ENCODE measurements at regions of chr10 and their contacts with region 1.

Region 1: DNA sequence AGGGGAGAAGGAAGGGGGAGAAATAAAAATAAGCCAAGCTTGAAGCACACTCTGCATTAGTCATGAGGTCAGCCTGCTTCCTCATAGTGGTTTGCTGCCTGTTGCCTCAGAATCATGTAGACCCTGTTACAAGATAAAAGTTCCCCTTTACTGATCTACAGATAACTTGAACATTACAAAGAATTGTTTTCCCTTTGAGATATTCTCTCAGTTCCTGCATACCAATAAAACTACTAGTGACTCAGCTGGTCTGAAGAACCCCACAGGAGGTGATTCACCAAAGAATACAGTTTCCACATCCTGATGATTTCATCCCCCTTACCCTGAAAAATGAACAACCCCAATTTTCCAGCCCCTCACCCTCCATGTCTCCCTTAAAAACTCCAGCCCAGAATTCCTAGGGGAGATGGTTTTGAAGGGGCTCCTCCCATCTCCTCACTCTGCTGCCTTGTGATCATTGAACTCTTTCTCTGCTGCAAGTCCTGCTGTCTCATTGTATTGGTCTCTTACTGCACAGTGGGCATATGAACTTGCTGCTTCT is 31.5 kb upstream of the NRP1 start:
- DNase-seq: peak; percentile 57
- H3K4me3 Mint-ChIP-seq: no peak overlapping the region
- H3K27ac Mint-ChIP-seq: peak overlapping the region; percentile 86
- H3K4me1 Mint-ChIP-seq: peaks cover 15% of the 10 kb centered on the region
- H3K27me3 Mint-ChIP-seq: no peaks in the 10 kb centered on the region

Region 2: GRCh38 chr10:33125522-33126517 is 240.1 kb before region 1 on chr10:
- intact Hi-C with region 1: no loop called
- DNase-seq: peak; percentile 82
- H3K4me3 Mint-ChIP-seq: peak overlapping the region; percentile 30
- H3K27ac Mint-ChIP-seq: peak overlapping the region; percentile 85
- H3K4me1 Mint-ChIP-seq: peaks cover 45% of the 10 kb centered on the region
- H3K27me3 Mint-ChIP-seq: no peaks in the 10 kb centered on the region

Region 3: DNA sequence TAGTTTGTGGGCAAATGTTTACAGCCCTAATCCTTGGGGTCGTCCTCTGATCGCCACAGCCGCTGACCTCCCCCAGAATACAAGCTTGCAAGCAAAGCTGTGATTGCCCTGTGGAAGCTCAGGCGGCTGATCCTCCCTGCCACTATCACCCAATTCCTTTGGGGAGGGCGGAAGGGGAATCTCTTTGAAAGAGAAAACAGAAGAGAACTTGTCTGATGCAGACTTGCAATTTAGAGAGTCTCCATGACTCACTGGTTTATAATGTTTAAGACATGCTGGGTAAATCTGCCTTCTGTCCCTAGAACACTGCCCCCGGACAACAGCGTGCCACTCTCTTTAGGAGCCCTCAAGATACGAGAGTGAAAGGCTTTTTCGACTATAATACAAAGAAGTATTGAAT is 107.0 kb before region 1 on chr10:
- intact Hi-C with region 1: loop called (anchors 5 kb)
- DNase-seq: no peak
- H3K4me3 Mint-ChIP-seq: no peak overlapping the region
- H3K27ac Mint-ChIP-seq: no peak overlapping the region
- H3K4me1 Mint-ChIP-seq: peaks cover 6% of the 10 kb centered on the region
- H3K27me3 Mint-ChIP-seq: peaks cover 23% of the 10 kb centered on the region

Region 4: DNA sequence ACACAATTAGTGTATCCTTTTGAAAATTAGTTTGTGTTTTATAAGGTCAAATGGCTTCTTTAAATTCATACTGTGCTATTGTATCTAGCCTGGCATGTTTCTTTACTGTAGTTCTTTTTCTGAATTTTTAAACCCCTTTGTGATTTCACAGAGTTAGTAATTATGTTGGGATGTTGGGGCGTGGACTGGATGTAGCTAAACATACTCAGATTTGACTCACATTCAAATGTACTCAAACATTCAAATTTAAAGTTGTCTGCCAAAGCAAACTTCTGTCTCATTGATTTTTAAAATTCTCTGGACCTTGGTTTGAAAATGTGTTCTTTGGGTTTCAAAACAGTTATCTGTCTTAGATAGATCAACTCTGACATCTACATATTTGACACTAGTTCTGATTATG is 24.3 kb before region 1 on chr10:
- intact Hi-C with region 1: no loop called
- DNase-seq: no peak
- H3K4me3 Mint-ChIP-seq: no peak overlapping the region
- H3K27ac Mint-ChIP-seq: no peak overlapping the region
- H3K4me1 Mint-ChIP-seq: peaks cover 7% of the 10 kb centered on the region
- H3K27me3 Mint-ChIP-seq: peaks cover 41% of the 10 kb centered on the region

Region 5: GRCh38 chr10:33376976-33377657 is 11.2 kb after region 1 on chr10:
- intact Hi-C with region 1: loop called (anchors 1 kb)
- DNase-seq: no peak
- H3K4me3 Mint-ChIP-seq: no peak overlapping the region
- H3K27ac Mint-ChIP-seq: peak overlapping the region; percentile 76
- H3K4me1 Mint-ChIP-seq: peaks cover 18% of the 10 kb centered on the region
- H3K27me3 Mint-ChIP-seq: no peaks in the 10 kb centered on the region

Region 6: GRCh38 chr10:33509231-33509831 is 143.4 kb after region 1 on chr10:
- intact Hi-C with region 1: loop called (anchors 5 kb)
- DNase-seq: peak; percentile 56
- H3K4me3 Mint-ChIP-seq: no peak overlapping the region
- H3K27ac Mint-ChIP-seq: no peak overlapping the region
- H3K4me1 Mint-ChIP-seq: peaks cover 3% of the 10 kb centered on the region
- H3K27me3 Mint-ChIP-seq: peaks cover 3% of the 10 kb centered on the region

Region 7: DNA sequence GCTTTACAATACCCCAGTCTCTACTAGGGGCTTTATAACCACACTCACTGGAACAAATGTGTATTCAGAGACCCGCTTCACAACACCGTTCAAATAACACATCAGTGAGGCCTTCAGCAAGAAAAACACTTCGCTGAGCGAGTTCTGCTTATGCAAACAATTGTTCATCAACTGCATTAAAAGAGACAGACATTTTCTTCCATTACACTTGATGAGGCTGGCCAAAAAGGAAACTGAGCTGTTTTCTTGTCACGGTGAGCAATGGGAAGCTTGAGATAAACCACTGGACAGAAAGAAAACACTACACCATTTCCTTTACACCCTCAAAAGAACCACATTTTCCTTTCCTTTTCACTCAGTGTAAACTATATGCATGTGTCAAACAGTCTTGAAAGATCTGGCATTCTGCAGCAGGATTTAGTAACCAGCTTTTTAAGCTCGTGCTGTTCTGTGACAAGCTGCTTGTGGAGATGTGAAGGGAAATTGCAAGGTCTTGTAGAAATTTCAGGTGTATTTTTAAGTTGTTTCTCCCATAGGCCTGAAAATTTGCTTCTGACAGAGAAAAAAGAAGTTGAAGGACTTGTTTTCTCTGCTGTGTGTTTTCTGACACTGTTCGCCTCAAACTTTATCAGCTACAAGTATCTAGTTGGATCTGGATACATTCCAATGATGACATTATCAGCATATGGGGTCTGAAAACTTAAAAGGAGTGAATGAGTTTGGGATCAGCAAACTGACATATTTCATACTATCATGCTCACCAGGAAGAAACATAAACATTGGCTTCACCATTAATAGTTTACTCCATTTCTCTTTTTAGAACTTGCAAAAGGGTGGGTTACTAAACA is 756.1 kb after region 1 on chr10:
- intact Hi-C with region 1: loop called (anchors 10 kb)
- DNase-seq: peak; percentile 77
- H3K4me3 Mint-ChIP-seq: peak overlapping the region; percentile 56
- H3K27ac Mint-ChIP-seq: peak overlapping the region; percentile 77
- H3K4me1 Mint-ChIP-seq: peaks cover 24% of the 10 kb centered on the region
- H3K27me3 Mint-ChIP-seq: no peaks in the 10 kb centered on the region